ENCODE measurements at regions of chr12 and their contacts with region 1.

Region 1: GRCh38 chr12:121773011-121773777 is 20.3 kb downstream of the RHOF start:
- DNase-seq: peak; percentile 76
- H3K4me3 Mint-ChIP-seq: no peak overlapping the region
- H3K27ac Mint-ChIP-seq: no peak overlapping the region
- H3K4me1 Mint-ChIP-seq: peaks cover 5% of the 10 kb centered on the region
- H3K27me3 Mint-ChIP-seq: no peaks in the 10 kb centered on the region
- CTCF ChIP-seq: peak; percentile 85

Region 2: GRCh38 chr12:121637231-121637914 is 135.8 kb before region 1 on chr12:
- CTCF ChIA-PET with region 1: no interaction called
- POLR2A ChIA-PET with region 1: no interaction called
- intact Hi-C with region 1: no loop called
- DNase-seq: no peak
- H3K4me3 Mint-ChIP-seq: no peak overlapping the region
- H3K27ac Mint-ChIP-seq: no peak overlapping the region
- H3K4me1 Mint-ChIP-seq: no peaks in the 10 kb centered on the region
- H3K27me3 Mint-ChIP-seq: no peaks in the 10 kb centered on the region
- CTCF ChIP-seq: no peak

Region 3: DNA sequence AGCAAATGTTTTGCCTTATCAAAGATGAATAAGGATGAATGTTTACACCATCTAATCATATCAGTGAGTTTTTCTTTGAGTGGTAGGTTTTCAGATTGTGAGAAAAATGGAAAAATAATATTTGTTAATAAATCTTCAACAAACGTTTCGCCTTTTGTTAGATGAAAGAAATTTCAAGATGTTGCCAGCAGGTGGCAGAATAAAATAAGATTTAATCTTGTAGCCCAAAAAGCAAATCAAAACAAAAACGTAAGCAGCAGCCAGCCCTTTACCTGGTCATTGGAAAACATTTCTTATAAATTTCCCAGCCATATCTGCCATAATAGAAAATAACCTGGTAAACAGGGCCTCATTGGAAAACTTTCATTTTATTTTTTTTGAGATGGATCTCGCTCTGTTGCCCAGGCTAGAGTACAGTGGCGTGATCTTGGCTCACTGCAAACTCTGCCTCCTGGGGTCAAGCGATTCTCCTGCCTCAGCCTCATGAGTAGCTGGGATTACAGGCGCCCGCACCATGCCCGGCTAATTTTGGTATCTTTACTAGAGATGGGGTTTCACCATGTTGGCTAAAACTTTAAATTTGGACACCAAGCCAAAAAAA is 76.0 kb before region 1 on chr12:
- CTCF ChIA-PET with region 1: interaction called, 26 read pairs
- POLR2A ChIA-PET with region 1: no interaction called
- intact Hi-C with region 1: loop called (anchors 1 kb)
- DNase-seq: peak; percentile 61
- H3K4me3 Mint-ChIP-seq: no peak overlapping the region
- H3K27ac Mint-ChIP-seq: no peak overlapping the region
- H3K4me1 Mint-ChIP-seq: no peaks in the 10 kb centered on the region
- H3K27me3 Mint-ChIP-seq: no peaks in the 10 kb centered on the region
- CTCF ChIP-seq: peak; percentile 54

Region 4: DNA sequence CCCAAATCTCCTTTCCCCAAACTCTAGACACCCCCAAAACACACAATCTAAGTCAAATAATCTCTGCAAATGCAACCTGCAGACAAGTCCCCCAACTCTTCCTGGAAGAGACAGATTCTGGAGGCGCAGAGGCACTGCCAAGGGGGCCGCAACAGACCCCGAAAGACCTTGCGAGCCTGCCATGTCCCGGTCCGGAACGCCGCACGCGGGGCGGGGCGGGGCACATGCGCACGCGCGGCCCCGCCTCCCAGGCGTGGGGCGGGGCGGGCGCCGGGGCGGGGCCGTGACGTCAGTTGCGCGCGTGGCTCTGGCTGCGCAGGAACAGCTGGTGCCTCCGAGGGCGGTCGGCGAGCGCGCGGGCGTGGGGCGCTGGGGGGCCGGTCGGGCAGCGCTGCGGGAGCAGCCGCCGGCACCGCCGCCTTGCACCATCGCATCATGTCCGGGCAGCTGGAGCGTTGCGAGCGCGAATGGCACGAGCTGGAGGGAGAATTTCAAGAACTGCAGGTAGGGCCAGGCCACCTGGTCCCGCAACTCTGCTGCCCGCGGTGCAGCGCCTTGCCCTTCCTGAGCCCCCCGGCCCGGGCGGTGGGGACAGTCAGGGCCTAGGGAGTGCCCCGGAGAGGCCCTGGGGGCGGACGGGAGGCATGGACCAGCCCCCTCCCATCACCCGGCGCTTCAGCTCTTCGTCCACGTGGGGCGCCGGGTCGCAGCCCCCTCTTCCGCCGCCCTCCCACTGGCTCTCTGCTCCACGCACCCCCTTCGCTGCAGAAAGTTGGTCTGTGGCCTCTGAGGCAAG is 60.5 kb before region 1 on chr12 and contains the start of gene TMEM120B:
- CTCF ChIA-PET with region 1: interaction called, 11 read pairs
- POLR2A ChIA-PET with region 1: interaction called, 3 read pairs
- intact Hi-C with region 1: no loop called
- DNase-seq: peak; percentile 70
- H3K4me3 Mint-ChIP-seq: peak within 1 kb of the TSS; percentile 95
- H3K27ac Mint-ChIP-seq: peak within 1 kb of the TSS; percentile 57
- H3K4me1 Mint-ChIP-seq: peaks cover 23% of the 10 kb centered on the region
- H3K27me3 Mint-ChIP-seq: no peaks in the 10 kb centered on the region
- CTCF ChIP-seq: no peak
- total RNA-seq, gene TMEM120B: 10.5 and 14.2 TPM in 2 replicates

Region 5: GRCh38 chr12:121786441-121786825 is 13.2 kb after region 1 on chr12:
- CTCF ChIA-PET with region 1: interaction called, 301 read pairs
- POLR2A ChIA-PET with region 1: interaction called, 5 read pairs
- intact Hi-C with region 1: no loop called
- DNase-seq: peak; percentile 100
- H3K4me3 Mint-ChIP-seq: no peak overlapping the region
- H3K27ac Mint-ChIP-seq: peak overlapping the region; percentile 76
- H3K4me1 Mint-ChIP-seq: peaks cover 35% of the 10 kb centered on the region
- H3K27me3 Mint-ChIP-seq: no peaks in the 10 kb centered on the region
- CTCF ChIP-seq: no peak

Region 6: DNA sequence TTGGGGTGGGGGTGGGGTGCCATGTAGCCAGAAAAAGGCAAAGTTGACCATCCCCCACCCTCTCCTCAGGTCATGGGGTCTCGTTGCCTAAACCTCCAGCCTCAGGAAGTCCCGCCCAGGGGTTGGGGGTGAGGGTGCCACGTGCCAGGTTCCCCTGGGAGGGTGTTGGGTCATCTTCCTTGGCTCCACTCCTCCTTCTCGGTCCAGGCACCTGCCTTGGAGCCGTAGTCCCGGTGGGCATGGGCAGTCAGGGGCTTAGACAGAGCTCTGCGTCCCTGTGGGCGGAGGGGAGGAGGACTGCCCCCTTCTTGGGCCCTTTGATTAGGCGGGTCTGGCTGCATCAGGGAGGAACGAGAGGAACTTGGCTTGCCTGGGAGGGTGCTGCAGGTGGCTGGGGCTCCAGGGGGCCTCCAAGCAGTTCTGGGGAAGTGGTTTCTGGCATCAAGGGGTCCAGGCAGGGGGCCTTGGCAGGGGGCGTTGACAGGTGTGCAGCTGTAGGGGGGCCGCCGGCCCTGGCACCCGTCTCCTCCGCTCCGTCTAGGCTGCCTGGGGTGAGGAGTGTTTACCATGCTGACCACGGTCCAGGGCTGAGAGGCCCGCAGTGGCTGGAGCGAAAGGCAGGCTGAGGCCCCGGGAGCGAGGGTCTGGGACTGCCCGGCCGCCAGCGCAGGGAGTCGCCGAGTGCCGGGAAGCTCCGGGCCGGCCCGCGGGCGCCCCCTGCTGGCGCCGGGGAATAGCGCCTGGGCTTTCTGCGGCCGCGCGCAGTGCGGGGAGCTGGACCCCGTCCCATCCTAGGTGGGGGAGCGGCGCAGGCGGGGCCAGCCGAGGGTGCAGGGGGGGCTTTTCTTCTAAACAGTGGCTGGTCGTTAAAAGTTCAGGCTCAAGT is 38.5 kb after region 1 on chr12:
- CTCF ChIA-PET with region 1: interaction called, 11 read pairs
- POLR2A ChIA-PET with region 1: no interaction called
- intact Hi-C with region 1: no loop called
- DNase-seq: peak; percentile 61
- H3K4me3 Mint-ChIP-seq: peak overlapping the region; percentile 82
- H3K27ac Mint-ChIP-seq: no peak overlapping the region
- H3K4me1 Mint-ChIP-seq: peaks cover 28% of the 10 kb centered on the region
- H3K27me3 Mint-ChIP-seq: no peaks in the 10 kb centered on the region
- CTCF ChIP-seq: peak; percentile 99

Region 7: GRCh38 chr12:122078141-122079032 is 305.2 kb after region 1 on chr12 and contains the start of gene MLXIP:
- CTCF ChIA-PET with region 1: no interaction called
- POLR2A ChIA-PET with region 1: no interaction called
- intact Hi-C with region 1: no loop called
- DNase-seq: peak; percentile 91
- H3K4me3 Mint-ChIP-seq: peak within 1 kb of the TSS; percentile 74
- H3K27ac Mint-ChIP-seq: peak within 1 kb of the TSS; percentile 43
- H3K4me1 Mint-ChIP-seq: peaks cover 18% of the 10 kb centered on the region
- H3K27me3 Mint-ChIP-seq: no peaks in the 10 kb centered on the region
- CTCF ChIP-seq: no peak
- total RNA-seq, gene MLXIP: 34.2 and 35.6 TPM in 2 replicates

Measured in MCF 10A (cell line).